Mammary epithelial cell (primary cell): ENCODE measurements at regions of chr12 and their contacts with region 1.

Region 1: DNA sequence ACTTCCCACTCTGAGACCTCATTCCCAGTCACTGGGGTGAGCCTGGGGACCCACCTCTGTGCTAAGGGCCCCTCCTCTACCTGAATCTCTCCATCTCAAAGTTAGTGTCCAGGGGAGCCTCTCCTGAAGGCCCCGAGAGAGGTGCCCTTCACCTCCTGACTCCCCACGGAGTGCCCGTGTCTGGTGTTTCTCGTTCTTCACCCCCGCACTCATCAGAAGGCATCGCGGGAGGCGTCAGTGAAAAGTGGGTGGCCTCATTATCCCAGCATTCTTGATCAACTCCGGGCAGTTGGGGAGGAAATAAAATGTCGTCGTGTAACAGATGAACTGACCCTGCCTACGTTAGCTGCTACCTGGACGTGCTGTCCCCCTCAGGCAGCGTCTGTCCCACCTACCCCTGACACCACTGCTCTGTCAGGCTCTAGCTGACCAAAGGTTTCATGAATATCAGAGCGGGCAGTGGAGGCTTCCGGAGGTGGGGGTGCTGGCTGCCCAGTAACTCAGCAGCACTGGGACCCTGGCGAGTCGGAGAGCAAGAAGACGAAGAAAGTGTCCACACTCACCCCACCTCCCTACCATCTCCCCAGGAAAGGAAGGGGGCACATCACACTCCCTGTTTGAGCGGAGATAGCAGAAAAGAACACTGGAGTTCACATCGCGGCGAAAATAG is 102.9 kb downstream of the PIWIL1 start:
- DNase-seq: no peak
- H3K4me3 ChIP-seq: no peak overlapping the region
- H3K27ac ChIP-seq: no peak overlapping the region
- H3K4me1 ChIP-seq: no peaks in the 10 kb centered on the region
- H3K27me3 ChIP-seq: no peaks in the 10 kb centered on the region
- CTCF ChIP-seq: no peak

Region 2: DNA sequence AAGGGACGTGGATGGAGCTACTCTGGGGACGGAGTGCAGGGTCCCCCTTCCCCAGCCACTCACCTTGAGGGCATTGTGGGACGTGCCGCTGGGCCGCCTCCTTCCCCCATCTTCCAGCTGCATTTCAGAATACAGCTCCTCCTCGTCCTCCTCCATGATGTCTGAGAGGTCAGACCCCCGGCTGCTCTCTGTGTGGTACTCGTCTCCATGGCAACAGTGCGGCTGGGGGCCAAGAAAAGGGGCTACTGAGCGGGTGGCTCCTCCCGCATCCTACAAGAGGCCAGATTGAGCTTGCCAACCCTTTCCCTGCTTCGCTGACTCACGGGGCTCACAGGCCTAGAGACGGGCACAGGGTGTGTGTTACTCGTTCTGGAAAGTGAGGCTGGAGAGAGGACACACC is 12.4 kb before region 1 on chr12:
- CTCF ChIA-PET with region 1: no interaction called
- dilution Hi-C with region 1: no loop called
- in situ Hi-C with region 1: no loop called
- intact Hi-C with region 1: no loop called
- DNase-seq: no peak
- H3K4me3 ChIP-seq: no peak overlapping the region
- H3K27ac ChIP-seq: no peak overlapping the region
- H3K4me1 ChIP-seq: no peaks in the 10 kb centered on the region
- H3K27me3 ChIP-seq: no peaks in the 10 kb centered on the region
- CTCF ChIP-seq: no peak

Region 3: DNA sequence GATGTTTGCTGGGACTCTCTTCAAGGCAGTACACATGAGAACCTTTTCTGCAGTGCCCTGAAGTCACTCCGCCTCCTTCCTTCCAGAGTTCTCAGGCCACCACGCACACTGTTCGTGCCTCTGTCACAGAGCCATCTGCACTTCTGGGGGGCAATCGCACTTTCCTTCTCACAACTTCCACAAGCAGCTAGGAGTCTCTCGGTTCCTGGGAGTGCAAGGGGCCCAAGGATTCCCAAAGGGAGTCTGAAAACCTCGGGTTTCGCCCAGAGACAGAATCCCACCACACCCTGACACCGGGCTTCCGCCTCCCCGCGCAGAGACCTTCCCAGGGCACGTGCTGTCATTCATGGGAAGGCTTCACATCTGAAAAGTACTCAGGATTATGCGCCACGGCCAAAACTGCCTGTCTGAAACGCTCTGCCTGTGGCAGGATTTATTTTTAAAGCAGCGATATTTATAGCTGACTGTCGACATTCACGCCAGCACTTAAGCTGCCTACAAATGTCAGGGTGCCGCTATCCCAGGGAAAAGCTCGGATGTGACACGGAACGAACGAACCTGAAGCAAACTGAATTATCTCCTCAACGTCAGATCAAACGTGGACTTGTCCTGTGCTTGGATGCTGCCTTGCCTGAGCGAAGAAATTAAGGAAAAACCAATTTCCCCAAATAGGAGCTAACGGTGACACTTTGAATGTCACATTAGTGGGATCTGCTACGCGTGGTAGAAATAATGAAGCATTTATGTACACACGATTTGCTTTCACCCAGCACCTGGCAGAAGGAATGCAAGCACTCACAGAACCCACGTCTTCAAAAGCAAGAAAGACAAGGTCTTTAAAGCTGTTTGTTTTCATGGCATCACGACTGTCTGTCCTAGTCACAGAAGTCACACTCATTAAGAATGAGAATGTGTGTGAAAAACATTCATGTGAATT is 51.1 kb after region 1 on chr12:
- CTCF ChIA-PET with region 1: no interaction called
- dilution Hi-C with region 1: loop called (anchors 10 kb)
- in situ Hi-C with region 1: no loop called
- intact Hi-C with region 1: no loop called
- DNase-seq: no peak
- H3K4me3 ChIP-seq: no peak overlapping the region
- H3K27ac ChIP-seq: no peak overlapping the region
- H3K4me1 ChIP-seq: no peaks in the 10 kb centered on the region
- H3K27me3 ChIP-seq: no peaks in the 10 kb centered on the region
- CTCF ChIP-seq: no peak